Posterior vena cava (tissue), 2 donors: ENCODE measurements at regions of chr16 and their contacts with region 1.

Region 1: GRCh38 chr16:64950262-64950661 is 171.6 kb downstream of the CDH11 start:
- DNase-seq: no peak

Region 2: DNA sequence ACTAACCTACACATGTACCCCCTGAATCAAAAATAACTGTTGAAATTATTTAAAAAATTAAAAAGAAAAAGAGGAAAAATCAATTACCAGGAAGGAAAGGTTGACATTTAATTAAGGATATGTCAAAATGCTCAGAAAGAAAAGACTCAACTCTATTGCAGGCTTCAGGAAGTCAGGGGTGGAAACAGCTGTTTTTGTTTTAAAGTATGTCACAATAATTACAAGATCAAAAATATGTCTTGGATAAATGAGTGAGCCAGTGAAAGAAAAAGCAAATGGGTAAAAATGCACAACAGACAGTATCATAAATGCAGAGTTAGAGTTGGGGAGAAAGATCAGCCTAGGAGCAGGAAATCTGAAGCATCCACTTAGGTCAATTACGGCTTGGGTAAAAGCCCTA is 25.6 kb after region 1 on chr16:
- intact Hi-C with region 1: no loop called
- DNase-seq: no peak

Region 3: GRCh38 chr16:65015564-65015963 is 65.3 kb after region 1 on chr16:
- intact Hi-C with region 1: loop called in 1 of 2 experiments (anchors 2 kb)
- DNase-seq: no peak

Region 4: GRCh38 chr16:65176603-65177002 is 226.3 kb after region 1 on chr16:
- intact Hi-C with region 1: no loop called
- DNase-seq: no peak

Region 5: DNA sequence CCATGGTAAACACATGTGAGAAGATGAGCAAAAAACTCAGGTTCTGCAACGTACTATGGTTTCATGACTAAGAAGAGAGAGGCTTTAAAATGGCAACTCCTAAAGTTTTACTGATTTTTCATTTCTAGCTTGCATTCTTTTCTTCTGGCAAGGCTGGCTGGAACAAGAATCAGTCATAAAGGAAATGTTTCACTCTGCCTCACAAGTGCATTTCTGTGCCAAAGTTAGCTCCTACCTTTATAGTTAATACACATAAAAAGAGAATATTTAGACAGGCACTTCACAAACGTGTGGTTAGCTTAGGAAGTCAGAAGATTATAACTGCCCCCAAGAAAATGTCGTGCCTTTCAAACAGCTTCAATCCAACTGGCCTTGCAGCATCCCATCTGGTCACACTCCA is 588.7 kb after region 1 on chr16:
- intact Hi-C with region 1: no loop called
- DNase-seq: no peak